ENCODE measurements at regions of chr5 and their contacts with region 1.

Region 1: GRCh38 chr5:131170540-131171275 is at the start of gene LYRM7:
- DNase-seq: peak; percentile 94
- ATAC-seq: peak; percentile 99
- total RNA-seq, gene LYRM7: 34.9 TPM

Region 2: GRCh38 chr5:130805648-130806047 is 365.1 kb before region 1 on chr5:
- intact Hi-C with region 1: no loop called
- DNase-seq: no peak
- ATAC-seq: no peak

Region 3: DNA sequence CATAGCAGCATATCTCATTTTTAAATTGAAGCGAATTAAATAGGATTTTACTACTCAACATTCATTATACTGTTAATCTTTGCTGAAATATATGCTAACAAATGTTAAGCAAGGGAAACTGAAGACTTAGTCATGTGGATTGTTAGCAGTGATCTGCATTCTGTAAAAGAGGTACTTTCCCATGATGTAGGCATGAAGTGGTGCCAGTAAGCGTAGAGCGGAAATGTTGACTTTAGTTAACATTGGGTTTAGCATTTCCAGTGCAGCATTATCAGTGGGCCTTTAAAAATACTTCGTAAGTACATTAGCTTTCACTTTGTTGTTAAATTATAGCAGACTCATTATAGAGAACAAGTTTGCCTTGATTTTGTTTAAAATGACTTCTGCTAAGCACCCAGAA is 223.4 kb after region 1 on chr5:
- intact Hi-C with region 1: no loop called
- DNase-seq: no peak
- ATAC-seq: no peak

Region 4: GRCh38 chr5:131417240-131417869 is 246.6 kb after region 1 on chr5:
- intact Hi-C with region 1: loop called (anchors 10 kb)
- DNase-seq: peak; percentile 80
- ATAC-seq: peak; percentile 47

Region 5: GRCh38 chr5:131983244-131983771 is 812.6 kb after region 1 on chr5:
- intact Hi-C with region 1: no loop called
- DNase-seq: no peak
- ATAC-seq: peak; percentile 28

Measured in left ventricle myocardium superior (tissue), 1 donor.